Activated CD8-positive, alpha-beta T cell treated with anti-CD3 and anti-CD28 coated beads for 36 hours (primary cell): ENCODE measurements at regions of chr7 and their contacts with region 1.

Region 1: GRCh38 chr7:25894902-25895791 is 256.9 kb upstream of the NFE2L3 start:
- DNase-seq: peak; percentile 72
- ATAC-seq: peak; percentile 71
- H3K4me3 Mint-ChIP-seq: peak overlapping the region; percentile 4
- H3K27ac Mint-ChIP-seq: no peak overlapping the region
- H3K4me1 Mint-ChIP-seq: peaks cover 27% of the 10 kb centered on the region
- H3K27me3 Mint-ChIP-seq: peaks cover 8% of the 10 kb centered on the region
- CTCF ChIP-seq: peak; percentile 73

Region 2: DNA sequence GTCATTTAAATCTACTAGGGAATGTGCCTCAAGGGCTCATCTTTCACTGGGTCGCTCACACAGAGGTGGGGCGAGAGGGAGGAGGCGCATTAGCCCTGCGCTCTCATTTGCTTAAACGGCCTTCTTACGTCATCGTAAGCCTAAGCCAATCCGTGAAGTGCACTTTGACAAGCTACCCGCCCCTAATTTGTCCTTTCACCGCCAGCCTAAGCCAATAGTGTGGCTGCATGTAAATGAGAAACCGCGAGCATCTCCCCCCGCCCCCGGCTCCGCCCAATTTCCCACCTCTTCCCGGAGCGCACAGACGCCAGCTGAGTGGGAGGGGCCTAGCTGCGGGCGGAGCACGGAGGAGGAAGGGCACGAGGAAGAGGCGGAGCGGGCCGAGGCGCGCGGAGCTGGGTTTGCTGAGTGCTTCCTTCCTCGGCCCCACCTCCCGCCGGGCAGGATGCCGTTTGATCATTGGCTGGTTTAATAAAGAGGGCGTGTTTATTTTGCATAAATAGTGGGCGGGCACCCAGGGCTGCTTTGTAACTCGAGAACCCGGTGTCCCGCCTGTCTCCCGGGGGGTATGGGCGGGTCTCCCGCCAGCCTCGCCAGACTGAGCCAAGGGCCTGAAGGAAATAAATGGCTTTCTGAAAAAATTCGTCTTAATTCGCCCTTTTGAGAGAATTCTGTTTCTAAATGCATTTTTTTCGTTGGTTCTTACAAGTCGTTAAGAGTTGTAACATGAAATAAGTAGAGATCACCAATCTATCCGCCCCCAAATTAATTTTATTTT is 32.7 kb before region 1 on chr7:
- CTCF ChIA-PET with region 1: interaction called, 12 read pairs
- POLR2A ChIA-PET with region 1: interaction called, 4 read pairs
- intact Hi-C with region 1: no loop called
- DNase-seq: peak; percentile 98
- ATAC-seq: peak; percentile 96
- H3K4me3 Mint-ChIP-seq: peak overlapping the region; percentile 61
- H3K27ac Mint-ChIP-seq: no peak overlapping the region
- H3K4me1 Mint-ChIP-seq: peaks cover 24% of the 10 kb centered on the region
- H3K27me3 Mint-ChIP-seq: peaks cover 43% of the 10 kb centered on the region
- CTCF ChIP-seq: no peak

Region 3: GRCh38 chr7:25908154-25908949 is 13.2 kb after region 1 on chr7:
- CTCF ChIA-PET with region 1: interaction called, 14 read pairs
- POLR2A ChIA-PET with region 1: interaction called, 3 read pairs
- intact Hi-C with region 1: no loop called
- DNase-seq: no peak
- ATAC-seq: no peak
- H3K4me3 Mint-ChIP-seq: no peak overlapping the region
- H3K27ac Mint-ChIP-seq: no peak overlapping the region
- H3K4me1 Mint-ChIP-seq: peaks cover 3% of the 10 kb centered on the region
- H3K27me3 Mint-ChIP-seq: peaks cover 2% of the 10 kb centered on the region
- CTCF ChIP-seq: no peak

Region 4: GRCh38 chr7:26049081-26049480 is 153.9 kb after region 1 on chr7:
- CTCF ChIA-PET with region 1: interaction called, 10 read pairs
- POLR2A ChIA-PET with region 1: no interaction called
- intact Hi-C with region 1: no loop called
- DNase-seq: no peak
- ATAC-seq: no peak
- H3K4me3 Mint-ChIP-seq: no peak overlapping the region
- H3K27ac Mint-ChIP-seq: no peak overlapping the region
- H3K4me1 Mint-ChIP-seq: no peaks in the 10 kb centered on the region
- H3K27me3 Mint-ChIP-seq: peaks cover 21% of the 10 kb centered on the region
- CTCF ChIP-seq: no peak

Region 5: GRCh38 chr7:26078437-26079336 is 183.5 kb after region 1 on chr7:
- CTCF ChIA-PET with region 1: interaction called, 18 read pairs
- POLR2A ChIA-PET with region 1: no interaction called
- intact Hi-C with region 1: no loop called
- DNase-seq: peak; percentile 92
- ATAC-seq: peak; percentile 99
- H3K4me3 Mint-ChIP-seq: no peak overlapping the region
- H3K27ac Mint-ChIP-seq: no peak overlapping the region
- H3K4me1 Mint-ChIP-seq: peaks cover 6% of the 10 kb centered on the region
- H3K27me3 Mint-ChIP-seq: peaks cover 18% of the 10 kb centered on the region
- CTCF ChIP-seq: peak; percentile 75

Region 6: GRCh38 chr7:26187380-26188205 is 292.4 kb after region 1 on chr7:
- CTCF ChIA-PET with region 1: interaction called, 7 read pairs
- POLR2A ChIA-PET with region 1: interaction called, 22 read pairs
- intact Hi-C with region 1: loop called (anchors 10 kb)
- DNase-seq: peak; percentile 40
- ATAC-seq: peak; percentile 21
- H3K4me3 Mint-ChIP-seq: peak overlapping the region; percentile 11
- H3K27ac Mint-ChIP-seq: peak overlapping the region; percentile 85
- H3K4me1 Mint-ChIP-seq: peaks cover 87% of the 10 kb centered on the region
- H3K27me3 Mint-ChIP-seq: no peaks in the 10 kb centered on the region
- CTCF ChIP-seq: no peak

Region 7: GRCh38 chr7:26667500-26668133 is 772.5 kb after region 1 on chr7:
- CTCF ChIA-PET with region 1: interaction called, 15 read pairs
- POLR2A ChIA-PET with region 1: no interaction called
- intact Hi-C with region 1: no loop called
- DNase-seq: peak; percentile 63
- ATAC-seq: peak; percentile 82
- H3K4me3 Mint-ChIP-seq: no peak overlapping the region
- H3K27ac Mint-ChIP-seq: no peak overlapping the region
- H3K4me1 Mint-ChIP-seq: peaks cover 16% of the 10 kb centered on the region
- H3K27me3 Mint-ChIP-seq: peaks cover 3% of the 10 kb centered on the region
- CTCF ChIP-seq: peak; percentile 72